ENCODE measurements at regions of chr7 and their contacts with region 1.

Region 1: GRCh38 chr7:135211179-135211945 is at the start of gene WDR91:
- DNase-seq: peak; percentile 87
- ATAC-seq: peak; percentile 92
- H3K4me3 Mint-ChIP-seq: peak within 1 kb of the TSS; percentile 97
- H3K27ac Mint-ChIP-seq: peak within 1 kb of the TSS; percentile 97
- H3K4me1 Mint-ChIP-seq: peaks cover 40% of the 10 kb centered on the region
- H3K27me3 Mint-ChIP-seq: no peaks in the 10 kb centered on the region
- CTCF ChIP-seq: no peak
- total RNA-seq, gene WDR91: 59.5 and 60.1 TPM in 2 replicates

Region 2: GRCh38 chr7:133252858-133253518 is 1958.4 kb before region 1 on chr7 and contains the start of gene EXOC4:
- CTCF ChIA-PET with region 1: no interaction called
- POLR2A ChIA-PET with region 1: no interaction called
- intact Hi-C with region 1: loop called (anchors 2 kb)
- DNase-seq: peak; percentile 67
- ATAC-seq: peak; percentile 100
- H3K4me3 Mint-ChIP-seq: peak within 1 kb of the TSS; percentile 95
- H3K27ac Mint-ChIP-seq: peak within 1 kb of the TSS; percentile 88
- H3K4me1 Mint-ChIP-seq: peaks cover 27% of the 10 kb centered on the region
- H3K27me3 Mint-ChIP-seq: no peaks in the 10 kb centered on the region
- CTCF ChIP-seq: no peak
- total RNA-seq, gene EXOC4: 89.1 and 103 TPM in 2 replicates

Region 3: DNA sequence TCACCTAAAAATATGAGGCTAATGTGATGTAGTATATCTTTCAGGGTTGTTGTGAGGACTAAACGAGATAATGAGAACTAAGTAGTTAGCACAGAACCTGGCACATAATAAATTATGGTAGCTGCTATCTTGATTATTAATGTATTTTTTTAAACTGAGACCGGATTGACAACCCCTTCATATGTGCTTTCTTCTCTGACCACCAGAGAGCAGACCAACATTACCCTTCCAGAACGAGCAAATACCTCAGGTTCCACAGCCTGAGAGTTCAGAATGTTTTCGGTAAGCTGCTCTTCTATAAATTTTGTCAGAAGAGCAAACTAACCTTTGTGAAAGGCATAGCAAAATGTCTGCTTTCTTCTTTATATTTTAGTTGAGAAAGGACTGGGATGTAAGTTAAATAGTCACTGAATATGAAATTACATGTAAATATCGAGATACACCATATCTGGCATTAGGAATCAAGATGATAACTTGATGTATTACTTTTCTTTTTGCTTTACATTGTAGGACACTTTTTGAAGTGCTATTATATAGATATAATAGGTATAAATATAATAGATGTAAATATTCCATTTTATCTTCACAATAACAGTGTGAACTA is 578.3 kb before region 1 on chr7:
- CTCF ChIA-PET with region 1: no interaction called
- POLR2A ChIA-PET with region 1: no interaction called
- intact Hi-C with region 1: loop called (anchors 1 kb)
- DNase-seq: no peak
- ATAC-seq: peak; percentile 71
- H3K4me3 Mint-ChIP-seq: no peak overlapping the region
- H3K27ac Mint-ChIP-seq: no peak overlapping the region
- H3K4me1 Mint-ChIP-seq: peaks cover 10% of the 10 kb centered on the region
- H3K27me3 Mint-ChIP-seq: peaks cover 14% of the 10 kb centered on the region
- CTCF ChIP-seq: no peak

Region 4: GRCh38 chr7:135186841-135187253 is 24.5 kb before region 1 on chr7:
- CTCF ChIA-PET with region 1: interaction called, 3 read pairs
- POLR2A ChIA-PET with region 1: interaction called, 62 read pairs
- intact Hi-C with region 1: loop called (anchors 1 kb)
- DNase-seq: peak; percentile 60
- ATAC-seq: peak; percentile 76
- H3K4me3 Mint-ChIP-seq: peak overlapping the region; percentile 74
- H3K27ac Mint-ChIP-seq: peak overlapping the region; percentile 80
- H3K4me1 Mint-ChIP-seq: peaks cover 51% of the 10 kb centered on the region
- H3K27me3 Mint-ChIP-seq: no peaks in the 10 kb centered on the region
- CTCF ChIP-seq: no peak

Region 5: GRCh38 chr7:135509903-135510602 is 298.7 kb after region 1 on chr7 and contains the start of gene CNOT4:
- CTCF ChIA-PET with region 1: no interaction called
- POLR2A ChIA-PET with region 1: no interaction called
- intact Hi-C with region 1: loop called (anchors 1 kb)
- DNase-seq: peak; percentile 87
- ATAC-seq: peak; percentile 96
- H3K4me3 Mint-ChIP-seq: no peak within 1 kb of the TSS
- H3K27ac Mint-ChIP-seq: no peak within 1 kb of the TSS
- H3K4me1 Mint-ChIP-seq: peaks cover 10% of the 10 kb centered on the region
- H3K27me3 Mint-ChIP-seq: no peaks in the 10 kb centered on the region
- CTCF ChIP-seq: no peak
- total RNA-seq, gene CNOT4: 34.4 and 36.8 TPM in 2 replicates